ENCODE measurements at regions of chr4 and their contacts with region 1.

Region 1: DNA sequence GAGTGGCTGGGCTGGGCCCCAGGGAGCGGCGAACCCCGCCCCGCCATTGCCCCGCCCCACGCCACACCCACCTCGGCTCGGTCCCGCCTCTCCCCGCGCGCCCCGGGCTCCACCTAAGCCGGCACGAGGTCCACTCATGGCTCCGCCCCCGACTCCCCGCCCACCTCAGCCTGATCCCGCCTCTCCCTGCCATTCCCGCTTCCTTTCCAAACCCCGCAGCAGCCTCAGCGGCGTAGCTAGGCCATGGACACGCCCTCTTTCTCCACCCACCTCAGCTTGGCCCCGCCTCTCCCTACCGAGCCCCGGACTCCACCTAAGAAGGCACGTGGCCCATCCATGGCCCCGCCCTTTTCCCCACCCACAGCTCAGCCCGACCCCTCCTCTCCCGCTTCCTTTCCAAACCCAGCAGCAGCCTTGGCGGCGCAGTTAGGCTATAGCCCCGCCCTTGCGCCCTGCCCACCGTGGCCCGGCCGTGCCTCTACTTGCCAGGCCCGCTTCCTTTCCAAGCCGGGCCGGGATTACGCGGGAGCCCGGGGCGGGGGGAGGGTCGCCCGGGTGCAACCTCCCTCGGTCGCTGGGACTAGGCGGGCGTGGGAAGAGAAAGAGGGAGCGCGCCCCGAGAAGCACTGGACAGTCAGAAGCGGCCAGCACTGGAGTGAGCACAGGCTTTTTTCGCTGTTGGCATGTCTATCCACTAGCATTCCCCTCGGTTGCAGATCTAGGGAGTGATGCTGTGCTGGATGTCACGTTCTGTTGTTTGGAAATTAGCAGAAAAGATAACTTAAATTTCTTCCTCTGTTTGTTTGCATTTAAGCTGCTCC is at the start of gene RELL1:
- DNase-seq: peak; percentile 95 to 100 (median 98)
- ATAC-seq: peak; percentile 81
- H3K4me3 ChIP-seq: peak within 1 kb of the TSS; percentile 78
- H3K4me3 Mint-ChIP-seq: peak within 1 kb of the TSS; percentile 99
- H3K27ac ChIP-seq: peak within 1 kb of the TSS; percentile 88 to 90
- H3K27ac Mint-ChIP-seq: peak within 1 kb of the TSS; percentile 99
- H3K4me1 ChIP-seq: peaks cover 32% of the 10 kb centered on the region
- H3K4me1 Mint-ChIP-seq: peaks cover 43% of the 10 kb centered on the region
- H3K27me3 ChIP-seq: no peaks in the 10 kb centered on the region
- H3K27me3 Mint-ChIP-seq: no peaks in the 10 kb centered on the region
- CTCF ChIP-seq: no peak
- total RNA-seq, gene RELL1: 48.6 to 50.3 TPM

Region 2: DNA sequence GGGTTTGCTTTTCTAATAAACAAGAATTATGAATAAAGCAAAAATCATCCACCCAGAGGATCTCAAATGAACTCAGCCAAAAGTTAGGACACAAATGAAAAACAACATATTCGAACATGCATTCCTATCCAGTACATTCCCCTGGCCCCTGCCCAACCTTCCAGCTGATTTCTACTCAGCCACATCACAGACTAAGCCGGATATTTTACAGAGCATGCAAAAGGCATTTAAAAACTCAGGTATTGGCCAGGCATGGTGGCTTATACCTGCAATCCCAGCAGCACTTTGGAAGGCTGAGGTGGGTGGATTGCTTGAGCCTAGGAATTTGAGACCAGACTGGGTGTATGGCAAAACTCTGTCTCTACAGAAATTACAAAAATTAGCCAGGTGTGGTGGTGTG is 55.0 kb before region 1 on chr4:
- CTCF ChIA-PET with region 1: no interaction called
- POLR2A ChIA-PET with region 1: no interaction called
- intact Hi-C with region 1: loop called in 1 of 2 experiments (anchors 5 kb)
- DNase-seq: no peak
- ATAC-seq: no peak
- H3K4me3 ChIP-seq: no peak overlapping the region
- H3K4me3 Mint-ChIP-seq: no peak overlapping the region
- H3K27ac ChIP-seq: no peak overlapping the region
- H3K27ac Mint-ChIP-seq: no peak overlapping the region
- H3K4me1 ChIP-seq: no peaks in the 10 kb centered on the region
- H3K4me1 Mint-ChIP-seq: no peaks in the 10 kb centered on the region
- H3K27me3 ChIP-seq: no peaks in the 10 kb centered on the region
- H3K27me3 Mint-ChIP-seq: no peaks in the 10 kb centered on the region
- CTCF ChIP-seq: no peak

Region 3: DNA sequence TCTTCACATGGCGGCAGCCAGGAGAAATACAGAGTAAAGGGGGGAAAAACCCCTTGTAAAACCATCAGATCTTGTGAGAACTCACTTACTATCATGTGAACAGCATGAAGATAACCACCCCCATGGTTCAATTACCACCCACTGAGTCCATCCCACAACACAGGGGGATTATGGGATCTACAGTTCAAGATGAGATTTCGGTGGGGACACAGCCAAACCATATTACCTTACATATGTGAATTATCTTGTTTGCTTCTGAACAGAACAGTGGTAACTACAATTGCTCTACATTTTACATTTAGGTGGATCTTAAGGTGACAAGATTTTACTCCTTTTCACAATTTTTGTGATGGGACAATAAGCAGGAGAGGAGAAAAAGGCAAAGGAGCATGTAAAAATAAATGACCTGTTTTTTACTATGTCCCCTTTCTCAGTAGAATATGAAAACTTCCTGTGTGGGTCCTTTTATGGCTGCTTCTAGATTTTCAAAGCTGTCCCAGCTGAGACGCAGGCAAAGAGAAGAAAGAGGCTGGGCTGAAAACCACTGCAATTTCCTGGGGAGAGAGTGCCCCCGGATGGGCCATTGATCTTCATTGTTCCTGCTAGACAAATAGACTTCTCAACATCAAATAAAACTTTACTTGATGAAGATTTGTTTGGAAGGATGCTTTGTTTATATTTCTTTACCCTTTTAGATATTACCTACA is 94.0 kb after region 1 on chr4:
- CTCF ChIA-PET with region 1: no interaction called
- POLR2A ChIA-PET with region 1: interaction called, 8 read pairs
- intact Hi-C with region 1: loop called (anchors 1 to 5 kb)
- DNase-seq: peak; percentile 39 to 87 (median 58)
- ATAC-seq: peak; percentile 99
- H3K4me3 ChIP-seq: no peak overlapping the region
- H3K4me3 Mint-ChIP-seq: peak overlapping the region; percentile 56
- H3K27ac ChIP-seq: peak overlapping the region; percentile 14 to 35
- H3K27ac Mint-ChIP-seq: peak overlapping the region; percentile 85
- H3K4me1 ChIP-seq: peaks cover 20% of the 10 kb centered on the region
- H3K4me1 Mint-ChIP-seq: peaks cover 28% of the 10 kb centered on the region
- H3K27me3 ChIP-seq: no peaks in the 10 kb centered on the region
- H3K27me3 Mint-ChIP-seq: no peaks in the 10 kb centered on the region
- CTCF ChIP-seq: peak; percentile 54

Region 4: GRCh38 chr4:37977471-37978247 is 291.1 kb after region 1 on chr4:
- CTCF ChIA-PET with region 1: no interaction called
- POLR2A ChIA-PET with region 1: no interaction called
- intact Hi-C with region 1: loop called (anchors 2 to 5 kb)
- DNase-seq: peak; percentile 58 to 91 (median 72)
- ATAC-seq: peak; percentile 79
- H3K4me3 ChIP-seq: peak overlapping the region; percentile 50
- H3K4me3 Mint-ChIP-seq: peak overlapping the region; percentile 91
- H3K27ac ChIP-seq: peak overlapping the region; percentile 33 to 74
- H3K27ac Mint-ChIP-seq: peak overlapping the region; percentile 84
- H3K4me1 ChIP-seq: peaks cover 17% of the 10 kb centered on the region
- H3K4me1 Mint-ChIP-seq: peaks cover 35% of the 10 kb centered on the region
- H3K27me3 ChIP-seq: no peaks in the 10 kb centered on the region
- H3K27me3 Mint-ChIP-seq: no peaks in the 10 kb centered on the region
- CTCF ChIP-seq: peak; percentile 73

Region 5: GRCh38 chr4:39181905-39182638 is 1495.5 kb after region 1 on chr4 and contains the start of gene WDR19:
- CTCF ChIA-PET with region 1: no interaction called
- POLR2A ChIA-PET with region 1: no interaction called
- intact Hi-C with region 1: loop called (anchors 5 to 10 kb)
- DNase-seq: peak; percentile 95 to 100 (median 98)
- ATAC-seq: peak; percentile 93
- H3K4me3 ChIP-seq: peak within 1 kb of the TSS; percentile 94
- H3K4me3 Mint-ChIP-seq: no peak within 1 kb of the TSS
- H3K27ac ChIP-seq: peak within 1 kb of the TSS; percentile 21 to 53
- H3K27ac Mint-ChIP-seq: no peak within 1 kb of the TSS
- H3K4me1 ChIP-seq: peaks cover 16% of the 10 kb centered on the region
- H3K4me1 Mint-ChIP-seq: peaks cover 9% of the 10 kb centered on the region
- H3K27me3 ChIP-seq: no peaks in the 10 kb centered on the region
- H3K27me3 Mint-ChIP-seq: peaks cover 3% of the 10 kb centered on the region
- CTCF ChIP-seq: peak; percentile 61
- total RNA-seq, gene WDR19: 14.5 to 16.7 TPM